Posterior vena cava (tissue), 2 donors: ENCODE measurements at regions of chr6 and their contacts with region 1.

Region 1: GRCh38 chr6:154080461-154081189 is 41.6 kb downstream of the OPRM1 start:
- DNase-seq: no peak

Region 2: GRCh38 chr6:153059761-153060160 is 1020.9 kb before region 1 on chr6:
- intact Hi-C with region 1: no loop called
- DNase-seq: no peak

Region 3: DNA sequence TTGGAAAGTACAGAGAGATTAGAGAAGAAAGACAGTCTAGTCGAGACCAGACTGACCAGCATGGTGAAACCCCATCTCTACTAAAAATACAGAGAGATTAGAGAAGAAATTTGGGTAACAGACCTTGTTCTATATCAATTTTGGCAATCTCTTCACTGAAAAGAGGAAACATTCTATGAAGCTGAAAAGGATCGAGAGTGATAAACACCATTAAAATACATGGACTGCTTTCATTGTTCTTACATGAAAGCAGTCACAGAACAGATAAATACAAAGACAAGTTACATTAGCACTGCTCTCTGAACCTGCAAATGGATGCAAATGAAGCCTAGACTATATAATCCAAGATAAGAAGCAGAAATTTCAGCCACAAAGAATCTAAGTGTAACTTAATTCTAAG is 50.0 kb before region 1 on chr6:
- intact Hi-C with region 1: loop called in 1 of 2 experiments (anchors 2 kb)
- DNase-seq: no peak

Region 4: DNA sequence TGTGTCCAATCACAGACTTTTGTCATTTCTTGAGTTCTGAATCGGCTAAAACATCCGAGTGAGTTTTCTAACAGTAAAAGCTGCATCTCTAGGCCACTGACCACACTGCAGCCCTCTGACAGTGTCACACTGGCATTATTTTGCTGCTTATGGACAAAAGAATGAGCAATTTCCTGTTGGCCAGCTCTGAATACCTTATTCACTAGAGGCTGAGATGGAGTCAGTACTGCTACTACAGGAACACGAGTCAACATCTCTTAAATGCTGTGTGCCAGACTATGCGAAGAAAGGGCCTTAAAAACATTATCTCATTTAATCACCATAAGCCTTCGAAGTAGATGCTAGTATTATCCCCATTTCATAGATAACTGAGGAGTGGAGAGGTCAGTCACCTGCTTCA is 318.5 kb after region 1 on chr6:
- intact Hi-C with region 1: no loop called
- DNase-seq: no peak